ENCODE measurements at regions of chr6 and their contacts with region 1.

Region 1: GRCh38 chr6:17212546-17213371 is 68.4 kb upstream of the RBM24 start:
- DNase-seq: no peak
- ATAC-seq: no peak
- H3K4me3 ChIP-seq: no peak overlapping the region
- H3K27ac ChIP-seq: no peak overlapping the region
- H3K4me1 ChIP-seq: no peaks in the 10 kb centered on the region
- H3K27me3 ChIP-seq: no peaks in the 10 kb centered on the region
- CTCF ChIP-seq: no peak

Region 2: DNA sequence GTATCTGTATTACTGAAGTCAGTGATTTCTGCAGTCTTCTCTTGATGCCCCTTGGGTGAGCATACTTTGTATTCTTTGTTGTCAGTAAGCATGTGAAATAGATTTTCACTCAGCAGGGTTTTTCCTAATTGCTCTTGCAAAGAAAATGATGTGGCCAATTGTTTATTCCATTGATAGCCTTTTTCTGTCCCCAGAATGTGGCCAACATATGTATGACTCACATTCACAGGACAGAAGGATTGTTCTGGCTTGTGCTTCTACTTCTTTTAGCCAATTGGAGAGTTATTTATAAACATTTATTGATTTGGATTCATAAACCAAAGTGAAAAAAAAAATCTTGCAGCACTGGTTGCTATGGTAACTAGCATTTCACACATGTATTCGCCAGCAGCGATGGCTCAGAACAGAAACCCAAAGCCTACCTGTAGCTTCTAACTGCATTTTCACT is 14.1 kb after region 1 on chr6:
- CTCF ChIA-PET with region 1: interaction called, 5 read pairs
- POLR2A ChIA-PET with region 1: interaction called, 10 read pairs
- in situ Hi-C with region 1: no loop called
- intact Hi-C with region 1: no loop called
- DNase-seq: no peak
- ATAC-seq: no peak
- H3K4me3 ChIP-seq: no peak overlapping the region
- H3K27ac ChIP-seq: no peak overlapping the region
- H3K4me1 ChIP-seq: no peaks in the 10 kb centered on the region
- H3K27me3 ChIP-seq: no peaks in the 10 kb centered on the region
- CTCF ChIP-seq: no peak

Region 3: DNA sequence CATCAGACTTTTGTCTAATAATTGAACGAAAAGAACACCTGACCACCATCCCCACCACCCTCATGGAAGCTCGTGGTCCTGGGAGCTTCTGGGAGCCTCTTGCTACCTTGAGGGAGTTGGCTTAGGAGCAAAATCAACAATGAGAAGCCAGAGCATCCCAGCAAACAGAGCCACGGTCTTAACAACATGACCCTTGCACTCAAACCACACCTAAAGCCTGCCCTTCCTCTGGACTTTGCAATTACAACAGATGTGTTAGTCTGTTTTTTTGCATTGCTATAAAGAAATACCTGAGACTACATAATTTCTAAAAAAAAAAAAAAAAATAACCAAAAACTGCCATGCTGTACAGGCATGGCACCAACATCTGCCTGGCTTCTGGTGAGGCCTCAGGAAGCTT is 58.9 kb after region 1 on chr6:
- CTCF ChIA-PET with region 1: no interaction called
- POLR2A ChIA-PET with region 1: interaction called, 10 read pairs
- in situ Hi-C with region 1: no loop called
- intact Hi-C with region 1: no loop called
- DNase-seq: no peak
- ATAC-seq: no peak
- H3K4me3 ChIP-seq: no peak overlapping the region
- H3K27ac ChIP-seq: no peak overlapping the region
- H3K4me1 ChIP-seq: peaks cover 2% of the 10 kb centered on the region
- H3K27me3 ChIP-seq: no peaks in the 10 kb centered on the region
- CTCF ChIP-seq: no peak